ENCODE measurements at regions of chr16 and their contacts with region 1.

Region 1: GRCh38 chr16:62298600-62298999 is 262.4 kb upstream of the CDH8 start:
- DNase-seq: no peak
- ATAC-seq: no peak
- H3K4me3 ChIP-seq: no peak overlapping the region
- H3K27ac ChIP-seq: no peak overlapping the region
- H3K4me1 ChIP-seq: no peaks in the 10 kb centered on the region
- H3K27me3 ChIP-seq: no peaks in the 10 kb centered on the region
- CTCF ChIP-seq: no peak

Region 2: GRCh38 chr16:62254847-62255246 is 43.8 kb before region 1 on chr16:
- intact Hi-C with region 1: loop called in 1 of 2 experiments (anchors 1 kb)
- DNase-seq: no peak
- ATAC-seq: no peak
- H3K4me3 ChIP-seq: no peak overlapping the region
- H3K27ac ChIP-seq: no peak overlapping the region
- H3K4me1 ChIP-seq: no peaks in the 10 kb centered on the region
- H3K27me3 ChIP-seq: no peaks in the 10 kb centered on the region
- CTCF ChIP-seq: no peak

Region 3: GRCh38 chr16:62353354-62353753 is 54.8 kb after region 1 on chr16:
- intact Hi-C with region 1: no loop called
- DNase-seq: no peak
- ATAC-seq: no peak
- H3K4me3 ChIP-seq: no peak overlapping the region
- H3K27ac ChIP-seq: no peak overlapping the region
- H3K4me1 ChIP-seq: no peaks in the 10 kb centered on the region
- H3K27me3 ChIP-seq: no peaks in the 10 kb centered on the region
- CTCF ChIP-seq: no peak